ENCODE measurements at regions of chr17 and their contacts with region 1.

Region 1: DNA sequence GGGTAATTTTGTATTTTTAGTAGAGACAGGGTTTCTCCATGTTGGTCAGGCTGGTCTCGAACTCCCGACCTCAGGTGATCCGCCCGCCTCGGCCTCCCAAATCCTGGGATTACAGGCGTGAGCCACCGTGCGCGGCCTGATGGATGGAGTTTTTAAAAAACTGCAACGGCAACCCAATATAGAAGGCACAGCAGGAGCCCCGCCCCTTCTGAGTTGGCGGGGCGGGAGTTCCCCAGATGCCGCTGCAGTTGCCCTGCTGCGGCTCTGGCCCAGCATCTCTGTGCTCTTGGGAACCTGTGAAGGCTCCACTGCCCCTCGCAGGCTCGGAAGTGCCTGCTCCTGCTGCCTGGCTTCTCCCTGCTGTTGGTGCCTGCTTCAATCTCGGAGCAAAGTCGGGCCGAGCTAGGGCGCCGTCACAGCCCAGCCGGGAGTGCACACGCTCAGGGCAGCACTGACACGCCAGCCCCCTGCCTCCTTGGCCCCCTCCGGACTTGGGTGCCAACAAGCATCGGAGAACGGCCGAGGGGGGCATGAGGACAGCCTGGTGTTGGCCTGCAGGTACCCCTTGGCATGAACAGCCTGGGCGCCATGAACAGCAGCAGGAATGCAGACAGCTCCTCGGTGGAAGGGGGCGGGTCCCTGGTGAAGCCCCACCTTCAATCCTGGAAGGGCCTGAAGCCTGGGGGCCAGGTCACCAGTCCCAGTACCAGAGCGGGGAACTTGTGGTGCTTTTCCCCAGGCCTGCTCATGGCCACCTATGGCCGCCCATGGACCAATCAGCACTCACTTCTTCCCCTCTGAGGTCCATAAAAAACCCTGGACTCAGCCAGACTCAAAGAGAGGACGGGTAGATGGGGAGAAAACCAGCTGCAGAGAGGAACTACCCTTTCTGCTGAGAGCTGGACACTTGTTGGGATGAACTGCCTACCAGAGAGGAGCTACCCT is 2.3 kb upstream of the NT5M start:
- DNase-seq: peak; percentile 87 to 93
- H3K4me3 ChIP-seq: peak overlapping the region; percentile 57 to 84 (median 70)
- H3K27ac ChIP-seq: peak overlapping the region; percentile 40; the same call in 1 of the 2 replicates
- H3K4me1 ChIP-seq: peaks cover 0 to 6% (median under 1%) of the 10 kb centered on the region in 4 experiments; a peak in 4 of 7 replicates
- H3K27me3 ChIP-seq: peaks cover 0 to 10% (median 8%) of the 10 kb centered on the region in 4 experiments; a peak in 5 of 7 replicates
- CTCF ChIP-seq: no peak
- EP300 ChIP-seq: no peak
- POLR2A ChIP-seq: peak in 1 of 2 experiments; percentile 75; a peak in 2 of 3 replicates
- RAD21 ChIP-seq: no peak

Region 2: DNA sequence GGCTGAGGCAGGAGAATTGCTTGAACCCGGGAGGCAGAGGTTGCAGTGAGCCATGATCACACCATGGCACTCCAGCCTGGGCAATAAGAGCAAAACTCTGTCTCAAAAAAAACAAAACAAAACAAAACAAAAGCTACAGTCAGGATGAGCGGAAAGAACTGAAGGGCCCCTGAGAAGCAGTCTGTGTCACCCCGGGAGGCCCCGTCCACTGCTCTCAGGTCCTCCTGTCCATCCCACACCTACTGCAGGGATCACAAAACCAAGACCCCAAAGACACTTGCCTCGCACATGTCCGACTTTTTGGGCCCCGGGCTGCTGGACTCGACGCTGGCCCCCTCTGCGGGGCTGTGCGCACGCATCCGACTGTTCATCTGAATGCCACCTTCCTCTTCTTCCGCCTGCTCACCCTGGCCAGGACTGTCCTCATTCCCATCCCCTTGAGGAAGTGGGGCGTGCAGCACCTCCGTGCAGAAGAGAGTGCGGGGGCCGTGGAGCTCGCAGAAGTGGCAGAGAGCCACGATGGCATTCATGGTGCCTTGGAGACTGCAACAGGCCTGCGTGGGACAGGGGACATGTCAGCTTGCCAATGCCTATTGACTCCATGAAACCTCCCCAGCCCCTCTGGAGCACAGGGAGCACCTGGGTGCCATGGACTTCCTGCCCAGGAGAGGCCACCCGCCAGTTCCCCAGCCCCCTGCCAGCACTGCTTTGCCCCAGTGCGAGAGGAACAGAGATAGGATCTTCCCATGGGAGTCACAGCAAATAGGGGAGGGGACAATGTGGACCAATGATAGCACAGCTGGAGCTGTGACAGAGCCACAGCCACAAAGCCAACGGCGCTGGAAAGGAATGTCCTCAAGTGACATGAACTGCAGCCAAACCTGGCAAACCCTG is 73.0 kb before region 1 on chr17:
- CTCF ChIA-PET with region 1: no interaction called
- POLR2A ChIA-PET with region 1: no interaction called
- DNase-seq: no peak
- H3K4me3 ChIP-seq: no peak overlapping the region
- H3K27ac ChIP-seq: no peak overlapping the region
- H3K4me1 ChIP-seq: no peaks in the 10 kb centered on the region
- H3K27me3 ChIP-seq: no peaks in the 10 kb centered on the region; a peak in 1 of 7 replicates
- CTCF ChIP-seq: no peak
- EP300 ChIP-seq: no peak
- POLR2A ChIP-seq: no peak
- RAD21 ChIP-seq: no peak

Region 3: GRCh38 chr17:17280613-17281549 is 20.0 kb before region 1 on chr17 and contains the start of gene COPS3:
- CTCF ChIA-PET with region 1: interaction called, 5 read pairs
- POLR2A ChIA-PET with region 1: interaction called, 33 read pairs
- DNase-seq: peak; percentile 86 to 96
- H3K4me3 ChIP-seq: peak within 1 kb of the TSS; percentile 88 to 96 (median 92)
- H3K27ac ChIP-seq: peak within 1 kb of the TSS; percentile 96
- H3K4me1 ChIP-seq: peaks cover 0 to 6% (median 4%) of the 10 kb centered on the region in 4 experiments; a peak in 3 of 7 replicates
- H3K27me3 ChIP-seq: no peaks in the 10 kb centered on the region
- CTCF ChIP-seq: peak in 1 of 3 experiments; percentile 16; a peak in 1 of 4 replicates
- EP300 ChIP-seq: 0 out of 3 replicates have a peak, but pooled peaks of 1 of the 2 experiments have one; percentile 11
- POLR2A ChIP-seq: peak; percentile 93 to 98
- RAD21 ChIP-seq: no peak
- total RNA-seq, gene COPS3: 110 and 112 TPM in 2 replicates

Region 4: DNA sequence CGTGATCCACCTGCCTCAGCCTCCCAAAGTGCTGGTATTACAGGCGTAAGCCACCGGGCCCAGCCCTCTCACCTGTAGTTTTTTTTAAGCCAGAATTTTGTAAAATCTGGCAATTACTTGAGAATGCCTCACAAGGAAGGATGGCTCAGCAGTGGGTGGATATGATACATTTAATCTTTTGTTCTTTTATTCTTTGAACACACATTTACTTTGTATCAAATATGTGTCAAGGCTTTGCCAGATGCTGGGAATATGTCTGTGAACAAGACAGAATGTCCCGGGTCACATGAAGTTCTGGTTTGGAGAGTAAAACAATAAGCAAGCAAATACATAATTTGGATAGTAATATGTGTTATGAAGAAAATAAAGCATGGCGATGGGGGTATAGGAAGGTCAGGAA is 14.9 kb before region 1 on chr17:
- CTCF ChIA-PET with region 1: interaction called, 5 read pairs
- POLR2A ChIA-PET with region 1: interaction called, 33 read pairs
- DNase-seq: no peak
- H3K4me3 ChIP-seq: no peak overlapping the region
- H3K27ac ChIP-seq: no peak overlapping the region
- H3K4me1 ChIP-seq: peaks cover 0 to 6% (median 0%) of the 10 kb centered on the region in 4 experiments; a peak in 1 of 7 replicates
- H3K27me3 ChIP-seq: no peaks in the 10 kb centered on the region
- CTCF ChIP-seq: no peak
- EP300 ChIP-seq: no peak
- POLR2A ChIP-seq: no peak
- RAD21 ChIP-seq: no peak

Region 5: DNA sequence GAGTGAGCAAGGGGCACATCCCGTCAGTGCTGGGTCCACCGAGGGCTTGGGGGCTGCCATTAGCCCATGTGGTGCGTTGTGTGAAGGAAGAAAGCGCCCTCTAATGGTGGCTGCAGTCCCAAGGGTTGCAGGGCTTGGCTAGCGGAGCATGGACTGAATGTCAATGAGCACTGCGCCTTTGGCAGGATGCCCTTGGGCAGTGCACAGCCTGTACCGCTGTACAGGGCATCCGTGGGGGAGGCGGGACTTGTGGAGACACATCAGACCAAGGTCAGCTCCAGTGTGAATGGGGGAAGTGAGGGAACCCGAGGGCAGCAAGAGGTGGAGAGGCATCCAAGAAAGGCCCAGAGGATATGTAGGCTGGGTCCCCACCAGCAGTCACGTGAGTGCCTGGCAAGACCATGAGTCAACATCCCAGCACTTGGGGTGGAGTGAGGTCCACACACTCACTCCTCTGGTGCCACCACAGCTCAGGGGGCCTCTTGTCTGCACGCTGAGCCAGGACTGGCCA is 100.4 kb after region 1 on chr17:
- CTCF ChIA-PET with region 1: no interaction called
- POLR2A ChIA-PET with region 1: no interaction called
- DNase-seq: peak; percentile 29 to 70
- H3K4me3 ChIP-seq: no peak overlapping the region
- H3K27ac ChIP-seq: no peak overlapping the region
- H3K4me1 ChIP-seq: peaks cover 0 to 5% (median 2%) of the 10 kb centered on the region in 4 experiments; a peak in 2 of 7 replicates
- H3K27me3 ChIP-seq: no peaks in the 10 kb centered on the region
- CTCF ChIP-seq: peak; percentile 75 to 92 (median 90)
- EP300 ChIP-seq: no peak
- POLR2A ChIP-seq: no peak
- RAD21 ChIP-seq: peak; percentile 65 to 77

Measured in H1 (cell line).